ENCODE measurements at regions of chr12 and their contacts with region 1.

Region 1: GRCh38 chr12:68223083-68223747 is 2.4 kb downstream of the IL26 start:
- DNase-seq: peak; percentile 76
- ATAC-seq: peak; percentile 100
- H3K4me3 ChIP-seq: peak overlapping the region in 1 of 2 experiments; percentile 34; a peak in 2 of 4 replicates
- H3K27ac ChIP-seq: no peak overlapping the region
- H3K4me1 ChIP-seq: peaks cover 0 to 8% of the 10 kb centered on the region in 2 experiments; a peak in 1 of 4 replicates
- H3K27me3 ChIP-seq: no peaks in the 10 kb centered on the region
- CTCF ChIP-seq: peak; percentile 71 to 91 (median 81)
- POLR2A ChIP-seq: no peak
- RAD21 ChIP-seq: peak; percentile 93

Region 2: DNA sequence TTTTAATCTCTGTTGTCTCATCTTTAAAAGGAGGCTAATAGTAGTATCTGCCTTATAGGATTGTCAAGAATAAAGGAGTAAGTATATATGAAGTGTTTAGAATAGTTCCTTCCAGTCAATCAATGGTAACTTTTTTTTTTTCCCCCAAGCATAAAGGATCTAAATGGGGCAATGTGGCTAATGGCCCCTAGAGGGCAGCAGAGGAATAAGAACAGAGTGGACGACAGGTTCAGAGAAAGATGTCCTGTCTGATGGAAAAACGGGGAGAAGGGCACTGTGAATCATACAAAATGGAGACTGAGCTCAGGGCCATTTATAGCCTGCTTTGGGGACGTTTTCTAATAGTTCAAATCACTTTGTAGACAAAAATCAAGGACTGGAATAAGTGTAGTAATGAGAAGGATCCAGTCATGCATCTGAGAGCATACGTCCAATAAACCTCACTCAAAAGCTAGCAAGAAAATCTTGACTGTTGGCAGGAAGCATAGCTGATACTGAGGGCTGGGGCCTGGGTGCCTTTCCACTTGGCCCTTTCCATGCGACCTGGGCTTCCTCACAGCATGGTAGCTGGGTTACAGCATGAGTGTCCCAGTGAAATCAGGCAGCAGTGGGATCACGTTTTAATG is 182.7 kb before region 1 on chr12:
- CTCF ChIA-PET with region 1: interaction called, 4 read pairs
- POLR2A ChIA-PET with region 1: no interaction called
- RAD21 ChIA-PET with region 1: no interaction called
- intact Hi-C with region 1: loop called (anchors 1 kb)
- DNase-seq: peak; percentile 65
- ATAC-seq: peak; percentile 92
- H3K4me3 ChIP-seq: no peak overlapping the region
- H3K27ac ChIP-seq: no peak overlapping the region
- H3K4me1 ChIP-seq: no peaks in the 10 kb centered on the region
- H3K27me3 ChIP-seq: no peaks in the 10 kb centered on the region
- CTCF ChIP-seq: peak; percentile 61 to 95 (median 85); a peak in 5 of 6 replicates
- POLR2A ChIP-seq: no peak
- RAD21 ChIP-seq: peak; percentile 86